Naive thymus-derived CD4-positive, alpha-beta T cell (primary cell): ENCODE measurements at regions of chr10 and their contacts with region 1.

Region 1: GRCh38 chr10:131126351-131127123 is 185.0 kb downstream of the TCERG1L start:
- DNase-seq: peak in 1 of 9 donors; percentile 6
- ATAC-seq: no peak
- H3K4me3 ChIP-seq: no peak overlapping the region
- H3K4me3 Mint-ChIP-seq: peak overlapping the region in 8 of 10 donors; percentile 20 to 74 (median 64)
- H3K27ac ChIP-seq: no peak overlapping the region
- H3K27ac Mint-ChIP-seq: peak overlapping the region in 8 of 9 donors; percentile 48 to 89 (median 78)
- H3K4me1 ChIP-seq: no peaks in the 10 kb centered on the region
- H3K4me1 Mint-ChIP-seq: peaks cover 0 to 31% (median 25%) of the 10 kb centered on the region in 7 donors
- H3K27me3 ChIP-seq: no peaks in the 10 kb centered on the region
- H3K27me3 Mint-ChIP-seq: peaks cover 0 to 4% (median 0%) of the 10 kb centered on the region in 5 donors

Region 2: DNA sequence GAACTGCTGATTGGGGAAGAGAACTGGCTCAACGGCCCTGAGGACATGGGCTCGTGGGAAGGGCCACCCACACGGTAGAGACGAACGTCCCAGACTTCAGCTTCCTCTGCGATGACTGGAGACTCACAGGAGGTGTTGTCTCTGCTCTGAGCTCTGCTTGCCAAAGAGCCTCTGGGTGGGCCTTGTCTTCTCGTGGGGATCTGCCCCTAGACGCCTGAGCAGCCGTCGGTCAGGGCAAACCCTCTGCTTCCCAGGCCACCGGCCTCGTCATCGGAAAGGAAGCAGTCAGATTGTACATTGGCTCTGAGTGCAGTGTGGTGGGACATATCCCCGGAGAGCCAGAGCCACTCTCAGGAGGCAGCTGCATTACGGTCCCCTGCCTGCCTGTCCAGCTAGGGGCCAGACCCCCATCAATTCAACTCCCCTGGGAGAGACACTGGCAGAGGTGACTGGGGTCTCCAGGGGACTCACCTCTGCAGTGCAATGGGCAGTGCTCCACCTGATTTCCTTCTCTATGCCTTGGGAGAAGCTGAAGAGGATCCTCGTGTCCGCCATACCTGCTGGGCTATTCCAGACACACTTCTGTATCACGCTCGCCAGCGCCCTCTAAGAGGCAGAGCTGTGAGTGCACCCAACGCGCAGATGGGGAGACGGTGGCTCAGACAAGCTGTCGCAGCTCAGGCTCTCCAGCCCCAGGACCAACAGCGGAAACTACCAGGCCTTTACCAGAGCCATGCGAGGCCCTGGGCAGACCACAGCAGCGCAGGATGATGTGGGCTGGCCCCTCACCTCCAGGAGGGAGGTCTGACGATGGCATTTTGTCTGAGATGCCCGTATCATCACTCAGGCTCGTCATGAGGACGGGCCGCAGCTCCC is 42.4 kb before region 1 on chr10:
- CTCF ChIA-PET with region 1: interaction called, 3 read pairs
- POLR2A ChIA-PET with region 1: no interaction called
- intact Hi-C with region 1: loop called in 1 of 2 experiments (anchors 5 kb)
- DNase-seq: no peak
- ATAC-seq: no peak
- H3K4me3 ChIP-seq: no peak overlapping the region
- H3K4me3 Mint-ChIP-seq: peak overlapping the region in 7 of 10 donors; percentile 2 to 80 (median 60)
- H3K27ac ChIP-seq: no peak overlapping the region
- H3K27ac Mint-ChIP-seq: peak overlapping the region in 5 of 9 donors; percentile 17 to 79 (median 68)
- H3K4me1 ChIP-seq: peaks cover 0 to 38% of the 10 kb centered on the region in 2 donors
- H3K4me1 Mint-ChIP-seq: peaks cover 13 to 66% (median 55%) of the 10 kb centered on the region in 7 donors
- H3K27me3 ChIP-seq: no peaks in the 10 kb centered on the region
- H3K27me3 Mint-ChIP-seq: peaks cover 0 to 2% (median 0%) of the 10 kb centered on the region in 5 donors

Region 3: GRCh38 chr10:131352765-131353290 is 226.3 kb after region 1 on chr10:
- CTCF ChIA-PET with region 1: no interaction called
- POLR2A ChIA-PET with region 1: no interaction called
- intact Hi-C with region 1: no loop called
- DNase-seq: no peak
- ATAC-seq: no peak
- H3K4me3 ChIP-seq: no peak overlapping the region
- H3K4me3 Mint-ChIP-seq: no peak overlapping the region
- H3K27ac ChIP-seq: no peak overlapping the region
- H3K27ac Mint-ChIP-seq: no peak overlapping the region
- H3K4me1 ChIP-seq: no peaks in the 10 kb centered on the region
- H3K4me1 Mint-ChIP-seq: no peaks in the 10 kb centered on the region
- H3K27me3 ChIP-seq: no peaks in the 10 kb centered on the region
- H3K27me3 Mint-ChIP-seq: peaks cover 0 to 41% (median 4%) of the 10 kb centered on the region in 5 donors